Cardiac septum (tissue), 1 donor: ENCODE measurements at regions of chr19 and their contacts with region 1.

Region 1: GRCh38 chr19:12440541-12441316 is at the start of gene ZNF443:
- DNase-seq: peak; percentile 99
- total RNA-seq, gene ZNF443: 2.0 TPM

Region 2: GRCh38 chr19:12333162-12334159 is 107.3 kb before region 1 on chr19 and contains the start of gene ZNF563:
- intact Hi-C with region 1: no loop called
- DNase-seq: peak; percentile 98
- total RNA-seq, gene ZNF563: 3.7 TPM

Region 3: DNA sequence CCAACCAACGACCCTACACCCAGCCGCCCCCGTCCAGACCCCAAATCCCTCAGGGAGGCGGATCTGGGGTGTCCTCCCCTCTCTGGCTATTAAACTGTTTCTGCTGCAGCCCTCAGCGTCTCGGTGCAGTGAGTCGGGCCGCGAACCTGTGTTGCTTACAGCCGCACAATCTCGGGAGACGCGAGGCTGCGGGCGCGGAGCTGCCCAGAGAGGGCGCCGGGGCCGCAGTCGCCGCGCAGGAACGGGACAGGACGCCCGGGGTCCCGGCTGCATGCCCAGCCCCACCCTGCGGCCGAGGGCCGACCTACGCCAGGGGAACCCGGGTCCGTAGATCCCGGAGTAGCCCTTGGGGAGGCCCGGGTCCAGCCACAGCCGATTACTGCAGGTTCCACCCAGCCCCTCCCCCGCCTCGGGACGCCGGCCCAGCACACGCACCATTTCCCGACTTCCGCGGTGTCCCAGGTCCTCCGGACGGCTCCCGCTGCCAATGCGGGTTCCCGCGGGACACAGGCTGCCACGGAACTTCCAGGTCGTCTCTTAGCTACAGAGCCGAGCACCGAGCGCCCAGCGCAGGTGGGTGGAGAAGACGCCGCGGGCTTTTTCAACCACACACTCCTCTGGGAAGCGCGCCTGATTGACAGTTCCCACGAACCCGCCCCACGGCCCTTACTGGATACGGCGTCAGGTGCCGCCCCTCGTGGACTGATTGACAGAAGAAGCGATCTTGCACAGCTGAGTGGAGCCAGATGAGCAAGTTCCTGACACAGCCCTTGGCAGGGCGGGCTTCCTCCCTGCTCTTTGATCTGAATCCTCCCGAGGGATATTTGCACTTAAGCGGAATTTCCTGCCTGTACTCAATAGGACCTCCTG is 39.9 kb before region 1 on chr19 and contains the start of gene ZNF799:
- intact Hi-C with region 1: loop called (anchors 2 kb)
- DNase-seq: peak; percentile 99
- total RNA-seq, gene ZNF799: 1.9 TPM

Region 4: GRCh38 chr19:12465211-12465610 is 24.5 kb after region 1 on chr19:
- intact Hi-C with region 1: no loop called
- DNase-seq: no peak

Region 5: GRCh38 chr19:12482509-12482886 is 41.8 kb after region 1 on chr19:
- intact Hi-C with region 1: loop called (anchors 2 kb)
- DNase-seq: no peak

Region 6: DNA sequence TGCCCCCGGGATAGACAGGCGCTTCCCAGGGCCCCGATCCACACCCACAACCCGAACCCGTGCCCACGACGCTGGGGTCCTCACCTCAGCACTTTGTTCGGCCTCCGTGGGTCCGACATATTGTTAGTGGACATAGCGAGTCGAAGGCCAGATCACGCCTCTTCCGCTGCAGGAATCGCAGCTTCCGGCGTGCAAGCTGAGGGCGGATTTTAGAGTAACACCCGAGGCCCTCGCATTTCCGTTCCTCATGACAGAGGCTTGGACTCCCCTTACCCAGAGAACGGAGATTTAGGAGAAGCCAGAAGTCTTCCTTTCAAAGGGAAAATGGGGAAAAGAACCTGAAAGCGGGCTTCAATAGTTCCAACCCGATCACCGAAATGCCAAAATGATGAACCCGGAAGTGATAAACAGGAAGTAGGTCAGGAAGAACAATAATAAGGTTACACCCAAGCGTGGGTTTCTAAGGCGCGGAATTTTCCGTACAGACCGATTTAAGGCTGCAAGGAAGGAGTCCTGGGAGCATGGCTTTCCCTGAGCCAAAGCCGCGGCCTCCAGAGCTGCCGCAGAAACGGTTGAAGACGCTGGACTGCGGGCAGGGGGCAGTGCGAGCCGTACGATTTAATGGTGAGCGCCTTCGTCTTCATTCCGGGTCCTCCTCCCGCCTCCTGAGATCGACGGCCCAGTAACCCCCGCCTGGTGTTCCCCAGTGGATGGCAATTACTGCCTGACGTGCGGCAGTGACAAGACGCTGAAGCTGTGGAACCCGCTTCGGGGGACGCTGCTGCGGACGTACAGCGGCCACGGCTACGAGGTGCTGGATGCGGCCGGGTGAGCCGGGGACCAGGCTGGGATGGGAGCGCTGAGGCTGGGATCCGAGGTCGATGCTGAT is 228.8 kb after region 1 on chr19:
- intact Hi-C with region 1: no loop called
- DNase-seq: peak; percentile 93